ENCODE measurements at regions of chr11 and their contacts with region 1.

Region 1: GRCh38 chr11:79482800-79483199 is 42.0 kb upstream of the TENM4 start:
- DNase-seq: peak; percentile 72
- ATAC-seq: peak; percentile 89
- H3K4me3 ChIP-seq: no peak overlapping the region
- H3K27ac ChIP-seq: no peak overlapping the region; the same call in 1 of the 2 replicates
- H3K4me1 ChIP-seq: peaks cover 26% of the 10 kb centered on the region
- H3K27me3 ChIP-seq: no peaks in the 10 kb centered on the region
- CTCF ChIP-seq: no peak
- EP300 ChIP-seq: peak; percentile 85 to 99; a peak in 3 of 4 replicates
- POLR2A ChIP-seq: no peak
- RAD21 ChIP-seq: no peak

Region 2: GRCh38 chr11:79406376-79406775 is 76.4 kb before region 1 on chr11:
- CTCF ChIA-PET with region 1: interaction called, 230 read pairs
- POLR2A ChIA-PET with region 1: interaction called, 3 read pairs
- RAD21 ChIA-PET with region 1: interaction called, 16 read pairs
- SMC1A ChIA-PET with region 1: interaction called, 127 read pairs
- in situ Hi-C with region 1: loop called (anchors 5 kb)
- intact Hi-C with region 1: no loop called
- DNase-seq: peak; percentile 57
- ATAC-seq: peak; percentile 97
- H3K4me3 ChIP-seq: no peak overlapping the region
- H3K27ac ChIP-seq: no peak overlapping the region
- H3K4me1 ChIP-seq: peaks cover 9% of the 10 kb centered on the region
- H3K27me3 ChIP-seq: no peaks in the 10 kb centered on the region; a peak in 1 of 4 replicates
- CTCF ChIP-seq: no peak
- EP300 ChIP-seq: peak; percentile 92 to 93
- POLR2A ChIP-seq: no peak
- RAD21 ChIP-seq: no peak

Region 3: DNA sequence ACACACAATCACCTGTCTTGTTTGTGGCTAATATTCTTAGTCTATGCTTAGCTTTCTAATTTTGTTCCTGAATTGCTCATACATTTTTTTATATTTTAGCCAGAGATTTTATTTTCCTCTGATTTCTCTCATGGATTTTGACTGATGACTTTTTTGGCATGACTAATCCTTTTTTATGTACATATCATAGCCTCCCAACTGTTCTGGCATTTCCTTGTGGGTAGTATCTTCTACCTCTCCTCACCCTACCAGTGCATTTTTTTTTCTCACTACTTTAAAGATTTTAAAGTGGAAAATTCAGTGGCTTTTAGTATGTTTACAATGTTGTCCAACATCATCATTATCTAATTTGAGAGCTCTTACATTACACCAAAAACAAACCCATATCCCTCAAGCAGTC is 42.5 kb after region 1 on chr11:
- CTCF ChIA-PET with region 1: no interaction called
- POLR2A ChIA-PET with region 1: no interaction called
- RAD21 ChIA-PET with region 1: no interaction called
- SMC1A ChIA-PET with region 1: no interaction called
- in situ Hi-C with region 1: no loop called
- intact Hi-C with region 1: no loop called
- DNase-seq: no peak
- ATAC-seq: no peak
- H3K4me3 ChIP-seq: no peak overlapping the region
- H3K27ac ChIP-seq: no peak overlapping the region
- H3K4me1 ChIP-seq: no peaks in the 10 kb centered on the region
- H3K27me3 ChIP-seq: no peaks in the 10 kb centered on the region; a peak in 1 of 4 replicates
- CTCF ChIP-seq: no peak
- EP300 ChIP-seq: no peak
- POLR2A ChIP-seq: no peak
- RAD21 ChIP-seq: no peak

Measured in GM12878 (cell line).